Left cardiac atrium (tissue), 4 donors: ENCODE measurements at regions of chr1 and their contacts with region 1.

Region 1: GRCh38 chr1:165073185-165074007 is 283.1 kb downstream of the LMX1A start:
- DNase-seq: no peak
- ATAC-seq: peak; percentile 67 to 68

Region 2: DNA sequence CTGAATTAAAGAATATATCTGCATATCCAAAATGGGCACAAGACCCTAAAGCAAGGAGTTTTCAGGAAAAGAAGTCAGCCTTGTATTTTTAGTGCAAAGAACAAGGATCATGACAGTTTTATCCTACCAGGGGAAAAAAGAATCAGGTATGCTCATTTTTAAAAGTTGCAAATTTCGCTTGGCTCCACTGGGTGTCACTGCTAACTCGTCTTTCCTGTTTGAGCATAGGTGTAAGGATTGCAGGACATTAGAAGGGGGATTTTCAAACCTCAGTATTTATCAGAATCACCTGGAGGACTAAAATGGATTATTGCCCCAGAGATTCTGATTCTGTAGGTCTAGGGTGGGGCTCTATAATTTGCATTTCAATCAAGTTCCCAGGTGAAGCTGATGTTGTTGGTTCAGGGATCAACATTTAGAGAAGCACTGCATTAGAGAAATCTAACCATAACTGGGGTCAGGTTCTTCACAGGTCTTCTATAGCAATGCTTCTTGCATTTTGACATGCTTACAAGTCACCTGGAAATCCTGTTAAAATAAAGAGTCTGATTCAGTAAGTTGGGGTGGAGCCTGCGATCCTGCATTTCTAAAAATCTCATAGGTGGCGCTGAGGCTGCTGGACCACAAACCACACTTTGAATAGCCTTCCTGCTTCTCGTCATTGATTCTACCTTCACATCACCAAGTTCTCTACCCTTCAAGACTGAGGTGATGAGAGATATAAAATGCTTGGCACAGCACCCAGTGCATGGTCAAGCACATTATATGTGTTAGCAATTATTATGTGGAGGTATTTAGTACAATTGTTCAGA is 1712.1 kb before region 1 on chr1:
- intact Hi-C with region 1: loop called in 1 of 2 experiments (anchors 5 kb)
- DNase-seq: no peak
- ATAC-seq: no peak

Region 3: DNA sequence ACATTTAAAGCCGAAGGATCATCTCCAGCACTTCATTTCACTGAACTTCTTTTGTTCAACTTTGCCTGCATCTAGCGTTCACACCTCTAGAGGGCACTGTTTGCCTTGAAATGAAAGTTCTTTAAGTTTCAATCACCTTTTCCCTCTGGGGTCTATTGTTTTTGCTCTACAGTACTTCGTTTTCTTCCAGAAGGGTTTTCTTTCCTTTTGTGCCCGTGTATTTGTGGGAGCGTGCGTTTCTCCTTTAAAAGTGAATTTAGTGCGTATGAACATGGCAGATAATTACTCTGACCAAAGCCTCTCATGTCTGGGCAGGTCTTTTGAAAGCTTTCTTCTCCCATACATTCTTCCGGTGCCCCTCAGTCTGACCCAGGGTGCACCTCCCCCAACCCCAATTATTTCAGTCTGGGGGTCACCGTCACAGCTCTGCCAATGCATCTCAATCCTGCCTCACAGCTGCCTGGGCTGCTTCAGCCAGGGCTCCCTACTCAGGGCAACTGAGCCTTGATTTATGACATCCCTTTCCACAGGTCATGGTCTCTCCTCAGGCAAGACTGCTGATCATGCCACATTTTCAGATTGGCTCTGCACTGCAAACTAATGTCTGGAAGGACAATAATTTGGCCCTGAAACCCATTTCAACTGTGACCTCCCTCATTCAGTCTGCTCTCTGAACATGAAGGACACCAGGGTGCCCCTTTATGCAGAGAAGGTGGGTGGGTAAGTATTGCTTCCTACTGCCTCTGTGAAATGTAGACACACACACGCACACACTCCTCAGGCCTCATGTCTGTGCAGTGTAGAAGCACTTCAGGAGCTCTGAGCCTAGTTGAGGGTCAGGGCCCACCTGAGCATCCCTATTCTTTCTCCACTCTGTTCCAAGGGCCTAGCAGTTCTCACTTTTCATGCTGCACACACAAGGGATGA is 1663.1 kb before region 1 on chr1:
- intact Hi-C with region 1: loop called in 1 of 2 experiments (anchors 5 kb)
- DNase-seq: no peak
- ATAC-seq: no peak

Region 4: GRCh38 chr1:163535807-163536206 is 1537.6 kb before region 1 on chr1:
- intact Hi-C with region 1: loop called in 1 of 2 experiments (anchors 10 kb)
- DNase-seq: no peak
- ATAC-seq: no peak

Region 5: GRCh38 chr1:165187031-165188009 is 113.9 kb after region 1 on chr1:
- intact Hi-C with region 1: no loop called
- DNase-seq: no peak
- ATAC-seq: no peak